ENCODE measurements at regions of chr12 and their contacts with region 1.

Region 1: DNA sequence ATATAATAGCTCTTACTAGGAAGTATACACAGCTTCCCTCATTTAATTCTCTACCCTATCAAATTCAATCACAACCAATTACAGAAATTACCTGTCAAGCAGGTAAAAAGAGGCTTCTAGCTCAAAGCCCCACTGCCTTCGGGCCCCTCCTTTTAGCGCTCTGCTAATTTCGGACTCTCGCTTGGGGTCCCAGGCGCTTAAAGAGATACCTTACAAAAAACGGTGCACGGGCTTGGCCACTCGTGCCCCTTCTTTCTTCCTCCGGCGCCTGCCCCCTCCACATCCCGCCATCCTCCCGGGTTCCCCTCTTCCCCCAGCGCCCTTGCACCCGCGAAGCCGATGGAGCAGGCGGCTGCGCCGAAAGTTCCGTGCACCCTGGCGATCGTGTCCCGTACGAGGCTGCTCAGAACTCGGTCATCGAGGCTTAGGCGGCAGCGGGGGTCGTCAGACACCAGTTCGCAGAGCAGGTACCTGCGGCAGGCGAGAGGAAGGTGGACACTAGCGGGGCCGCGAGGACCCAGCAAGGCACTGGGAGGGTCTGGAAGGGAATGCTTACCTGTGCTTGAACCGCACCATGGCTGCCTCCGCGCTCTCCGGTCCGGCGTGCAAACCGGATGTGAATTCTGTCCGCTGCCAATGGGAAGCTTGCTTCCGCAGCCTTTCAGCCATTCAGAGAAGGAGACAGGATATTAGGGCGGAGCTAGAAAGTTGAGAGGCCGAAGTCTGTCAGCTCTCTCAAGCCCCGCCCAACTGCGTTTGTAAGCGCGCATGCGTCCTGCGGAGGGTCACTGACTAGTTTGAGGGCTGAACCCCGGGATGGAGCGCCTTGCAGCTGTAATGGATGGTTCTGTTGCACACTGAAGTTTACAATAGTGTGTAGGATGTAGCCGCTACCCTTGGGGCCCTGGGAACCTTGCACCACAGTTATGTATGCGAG is at the start of gene POP5:
- DNase-seq: peak; percentile 100
- ATAC-seq: peak; percentile 80
- H3K4me3 ChIP-seq: peak within 1 kb of the TSS; percentile 95
- H3K27ac ChIP-seq: peak within 1 kb of the TSS; percentile 40
- H3K4me1 ChIP-seq: peaks cover 15% of the 10 kb centered on the region
- H3K27me3 ChIP-seq: no peaks in the 10 kb centered on the region
- CTCF ChIP-seq: no peak
- total RNA-seq, gene POP5: 83.8 and 89.8 TPM in 2 replicates

Region 2: DNA sequence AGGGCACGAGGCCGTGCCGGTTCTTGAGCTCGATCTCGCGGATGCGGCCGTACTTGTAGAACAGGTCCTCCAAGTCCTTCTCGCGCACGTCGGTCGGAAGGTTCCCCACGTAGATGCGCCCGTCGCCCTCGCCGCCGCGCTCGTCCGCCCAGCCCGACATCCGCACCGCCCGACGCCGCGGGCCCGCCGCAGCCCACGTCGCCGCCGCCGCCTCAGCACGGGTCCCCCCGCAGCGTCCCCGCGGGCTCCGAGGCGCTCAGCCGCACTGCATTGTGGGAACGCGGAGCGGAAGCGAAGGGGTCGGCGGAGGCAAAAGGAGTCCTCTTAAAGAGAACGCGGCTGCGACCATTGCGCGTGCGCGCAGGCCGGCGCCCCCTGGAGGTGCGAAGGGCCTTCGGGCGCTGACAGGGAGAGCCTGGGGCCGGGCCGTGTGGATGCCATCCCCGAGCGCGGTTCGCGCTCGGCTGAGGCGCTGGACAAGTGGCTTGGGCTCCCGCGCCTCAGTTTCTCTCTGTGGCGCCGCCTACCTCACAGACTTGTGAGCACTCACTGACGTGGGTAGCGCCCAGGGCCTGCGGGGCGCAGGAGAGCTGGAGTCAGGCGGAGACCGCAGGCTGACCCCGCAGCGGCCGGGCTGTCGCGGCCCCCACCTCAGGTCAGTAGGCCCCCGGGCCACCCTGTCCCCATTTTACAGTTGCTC is 111.5 kb before region 1 on chr12 and contains the start of gene SRSF9:
- CTCF ChIA-PET with region 1: no interaction called
- POLR2A ChIA-PET with region 1: interaction called, 12 read pairs
- intact Hi-C with region 1: no loop called
- DNase-seq: peak; percentile 98
- ATAC-seq: peak; percentile 78
- H3K4me3 ChIP-seq: peak within 1 kb of the TSS; percentile 95
- H3K27ac ChIP-seq: peak within 1 kb of the TSS; percentile 66
- H3K4me1 ChIP-seq: peaks cover 34% of the 10 kb centered on the region
- H3K27me3 ChIP-seq: no peaks in the 10 kb centered on the region
- CTCF ChIP-seq: peak; percentile 92
- total RNA-seq, gene SRSF9: 319 and 382 TPM in 2 replicates

Region 3: GRCh38 chr12:120649442-120650232 is 68.6 kb after region 1 on chr12:
- CTCF ChIA-PET with region 1: interaction called, 37 read pairs
- POLR2A ChIA-PET with region 1: interaction called, 5 read pairs
- intact Hi-C with region 1: loop called (anchors 1 kb)
- DNase-seq: no peak
- ATAC-seq: no peak
- H3K4me3 ChIP-seq: peak overlapping the region; percentile 64; the same call in 1 of the 2 replicates
- H3K27ac ChIP-seq: no peak overlapping the region
- H3K4me1 ChIP-seq: peaks cover 5% of the 10 kb centered on the region
- H3K27me3 ChIP-seq: no peaks in the 10 kb centered on the region
- CTCF ChIP-seq: peak; percentile 38; the same call in 1 of the 2 replicates

Region 4: GRCh38 chr12:120686690-120687577 is 105.9 kb after region 1 on chr12 and contains the start of gene MLEC:
- CTCF ChIA-PET with region 1: no interaction called
- POLR2A ChIA-PET with region 1: no interaction called
- intact Hi-C with region 1: loop called (anchors 1 kb)
- DNase-seq: peak; percentile 98
- ATAC-seq: peak; percentile 76
- H3K4me3 ChIP-seq: peak within 1 kb of the TSS; percentile 96
- H3K27ac ChIP-seq: peak within 1 kb of the TSS; percentile 93
- H3K4me1 ChIP-seq: peaks cover 34% of the 10 kb centered on the region
- H3K27me3 ChIP-seq: no peaks in the 10 kb centered on the region
- CTCF ChIP-seq: peak; percentile 18; the same call in 1 of the 2 replicates
- total RNA-seq, gene MLEC: 158 and 166 TPM in 2 replicates

Region 5: GRCh38 chr12:120710031-120710804 is 129.2 kb after region 1 on chr12 and contains the start of gene UNC119B:
- CTCF ChIA-PET with region 1: no interaction called
- POLR2A ChIA-PET with region 1: interaction called, 10 read pairs
- intact Hi-C with region 1: loop called (anchors 1 kb)
- DNase-seq: peak; percentile 56
- ATAC-seq: peak; percentile 68
- H3K4me3 ChIP-seq: peak within 1 kb of the TSS; percentile 83
- H3K27ac ChIP-seq: 0 out of 2 replicates have a peak within 1 kb of the TSS, but pooled peaks have one; percentile 9
- H3K4me1 ChIP-seq: peaks cover 25% of the 10 kb centered on the region
- H3K27me3 ChIP-seq: no peaks in the 10 kb centered on the region
- CTCF ChIP-seq: no peak
- total RNA-seq, gene UNC119B: 15.9 and 23.8 TPM in 2 replicates

Region 6: GRCh38 chr12:120971299-120972179 is 390.5 kb after region 1 on chr12:
- CTCF ChIA-PET with region 1: interaction called, 3 read pairs
- POLR2A ChIA-PET with region 1: no interaction called
- intact Hi-C with region 1: loop called (anchors 1 kb)
- DNase-seq: peak; percentile 83
- ATAC-seq: peak; percentile 88
- H3K4me3 ChIP-seq: no peak overlapping the region
- H3K27ac ChIP-seq: no peak overlapping the region
- H3K4me1 ChIP-seq: no peaks in the 10 kb centered on the region
- H3K27me3 ChIP-seq: no peaks in the 10 kb centered on the region
- CTCF ChIP-seq: peak; percentile 94

Region 7: GRCh38 chr12:121110211-121110940 is 529.3 kb after region 1 on chr12:
- CTCF ChIA-PET with region 1: no interaction called
- POLR2A ChIA-PET with region 1: no interaction called
- intact Hi-C with region 1: loop called (anchors 10 kb)
- DNase-seq: peak; percentile 77
- ATAC-seq: peak; percentile 84
- H3K4me3 ChIP-seq: no peak overlapping the region
- H3K27ac ChIP-seq: no peak overlapping the region
- H3K4me1 ChIP-seq: no peaks in the 10 kb centered on the region
- H3K27me3 ChIP-seq: no peaks in the 10 kb centered on the region
- CTCF ChIP-seq: peak; percentile 99